ENCODE measurements at regions of chr3 and their contacts with region 1.

Region 1: GRCh38 chr3:129316131-129317013 is 37.7 kb downstream of the HMCES start:
- DNase-seq: peak; percentile 93
- ATAC-seq: peak; percentile 41
- H3K4me3 Mint-ChIP-seq: peak overlapping the region; percentile 81
- H3K27ac Mint-ChIP-seq: peak overlapping the region; percentile 65
- H3K4me1 Mint-ChIP-seq: peaks cover 29% of the 10 kb centered on the region
- H3K27me3 Mint-ChIP-seq: no peaks in the 10 kb centered on the region

Region 2: DNA sequence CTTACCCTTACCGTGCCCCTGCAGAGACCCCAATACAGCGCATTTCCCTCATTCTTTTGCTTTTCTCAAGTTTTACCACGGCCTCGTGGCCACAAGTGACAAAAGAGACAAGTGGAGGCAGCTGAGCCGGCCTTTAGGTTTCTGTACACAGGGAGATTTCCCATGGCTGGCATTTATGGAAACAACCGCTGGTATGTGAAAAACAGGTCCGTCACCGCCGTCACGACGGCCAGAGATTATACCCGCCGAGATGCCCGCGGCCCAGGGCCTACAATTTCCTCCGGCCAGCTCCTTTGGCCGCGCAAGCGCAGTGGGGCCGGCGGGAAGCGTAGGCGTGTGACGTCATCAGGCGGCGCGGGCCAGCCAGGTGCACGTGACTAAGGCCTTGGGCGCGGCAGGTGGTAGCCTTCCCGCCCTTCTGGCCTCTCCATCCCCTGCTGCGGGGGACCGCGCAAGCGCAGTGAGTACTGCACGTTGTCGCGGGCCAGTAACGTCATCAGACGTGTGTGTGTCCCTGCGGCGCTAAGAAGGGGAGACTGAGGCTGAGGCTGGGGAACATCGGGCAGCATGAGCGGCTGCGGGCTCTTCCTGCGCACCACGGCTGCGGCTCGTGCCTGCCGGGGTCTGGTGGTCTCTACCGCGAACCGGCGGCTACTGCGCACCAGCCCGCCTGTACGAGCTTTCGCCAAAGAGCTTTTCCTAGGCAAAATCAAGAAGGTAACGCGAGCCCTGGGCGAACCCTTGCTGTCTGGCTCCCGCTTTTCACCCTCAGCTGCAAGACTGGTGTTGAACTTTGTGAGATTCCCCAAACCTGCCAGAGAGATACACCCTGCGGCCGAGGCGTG is 437.0 kb before region 1 on chr3 and contains the start of gene ACAD9:
- POLR2A ChIA-PET with region 1: interaction called, 13 read pairs
- DNase-seq: peak; percentile 99
- ATAC-seq: peak; percentile 94
- H3K4me3 Mint-ChIP-seq: peak within 1 kb of the TSS; percentile 96
- H3K27ac Mint-ChIP-seq: peak within 1 kb of the TSS; percentile 92
- H3K4me1 Mint-ChIP-seq: peaks cover 46% of the 10 kb centered on the region
- H3K27me3 Mint-ChIP-seq: no peaks in the 10 kb centered on the region
- total RNA-seq, gene ACAD9: 55.9 to 63.5 TPM

Region 3: DNA sequence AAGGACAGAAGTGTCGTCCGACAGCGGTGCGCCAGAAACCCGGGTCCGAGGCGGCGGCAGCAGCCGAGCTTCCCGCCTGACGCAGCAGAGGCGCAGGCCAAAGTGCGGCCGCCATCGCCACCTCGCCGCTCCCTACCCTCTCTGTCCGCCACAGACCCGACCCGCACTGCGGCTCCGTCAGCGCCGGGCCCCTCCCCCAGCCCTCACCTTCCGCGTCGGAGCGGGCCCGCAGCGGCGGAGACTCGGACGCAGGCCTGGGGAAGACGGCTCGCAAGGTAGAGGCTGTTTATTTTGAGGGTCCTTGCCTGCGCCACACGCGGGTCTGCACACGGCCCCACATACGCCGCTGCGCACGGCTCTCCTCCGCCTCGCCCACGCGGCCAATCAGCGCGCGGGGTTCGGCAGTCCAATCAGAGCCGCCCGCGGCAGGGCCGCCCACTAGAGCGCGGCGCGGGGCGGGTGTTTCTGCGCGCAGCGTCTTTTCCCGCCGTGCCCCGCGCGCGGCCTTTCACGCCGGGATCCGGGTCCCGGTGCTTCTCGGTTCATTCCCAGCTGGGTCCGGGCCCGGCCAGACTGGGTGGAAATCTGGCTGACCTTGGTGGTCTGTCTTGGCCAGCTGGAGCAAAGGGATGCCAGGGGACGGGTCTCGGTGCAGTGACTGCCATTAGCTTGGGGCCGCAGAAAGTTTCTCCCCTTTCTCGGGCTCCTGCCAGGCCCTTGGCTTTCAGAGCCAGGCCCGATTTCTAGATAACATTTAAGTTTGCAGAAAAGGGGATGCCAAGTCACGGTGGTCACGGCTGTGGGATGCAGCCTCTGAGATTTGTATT is 132.6 kb before region 1 on chr3 and contains the start of gene CNBP:
- POLR2A ChIA-PET with region 1: interaction called, 16 read pairs
- DNase-seq: peak; percentile 97
- ATAC-seq: peak; percentile 98
- H3K4me3 Mint-ChIP-seq: peak within 1 kb of the TSS; percentile 92
- H3K27ac Mint-ChIP-seq: peak within 1 kb of the TSS; percentile 98
- H3K4me1 Mint-ChIP-seq: peaks cover 38% of the 10 kb centered on the region
- H3K27me3 Mint-ChIP-seq: no peaks in the 10 kb centered on the region
- total RNA-seq, gene CNBP: 309 to 312 TPM

Region 4: GRCh38 chr3:129278439-129278970 is 37.9 kb before region 1 on chr3 and contains the start of gene HMCES:
- POLR2A ChIA-PET with region 1: interaction called, 102 read pairs
- DNase-seq: peak; percentile 96
- ATAC-seq: peak; percentile 90
- H3K4me3 Mint-ChIP-seq: peak within 1 kb of the TSS; percentile 99
- H3K27ac Mint-ChIP-seq: peak within 1 kb of the TSS; percentile 97
- H3K4me1 Mint-ChIP-seq: peaks cover 40% of the 10 kb centered on the region
- H3K27me3 Mint-ChIP-seq: no peaks in the 10 kb centered on the region
- total RNA-seq, gene HMCES: 59.7 to 60.8 TPM

Region 5: DNA sequence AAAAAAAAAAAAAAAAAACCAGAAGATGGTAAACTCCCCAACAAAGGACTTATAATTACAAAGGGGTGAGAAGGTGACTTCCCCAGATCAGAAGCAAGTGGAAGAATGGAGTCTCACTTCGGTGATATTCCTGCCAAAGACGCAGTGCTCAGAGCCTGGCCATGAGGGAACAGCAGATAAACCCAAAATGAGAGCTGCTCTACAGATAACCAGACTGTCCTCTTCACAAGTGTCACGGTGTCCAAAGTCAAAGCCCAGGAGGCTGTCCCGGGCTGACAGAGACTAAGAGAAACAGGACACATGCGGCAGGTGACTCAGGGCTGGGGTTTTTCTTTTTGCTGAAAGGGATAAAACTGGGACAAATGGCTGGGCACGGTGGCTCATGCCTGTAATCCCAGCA is 11.1 kb after region 1 on chr3:
- POLR2A ChIA-PET with region 1: interaction called, 21 read pairs
- DNase-seq: no peak
- ATAC-seq: no peak
- H3K4me3 Mint-ChIP-seq: no peak overlapping the region
- H3K27ac Mint-ChIP-seq: no peak overlapping the region
- H3K4me1 Mint-ChIP-seq: no peaks in the 10 kb centered on the region
- H3K27me3 Mint-ChIP-seq: peaks cover 4% of the 10 kb centered on the region